ENCODE measurements at regions of chr2 and their contacts with region 1.

Region 1: GRCh38 chr2:239093952-239094351 is 246.1 kb downstream of the TWIST2 start:
- DNase-seq: no peak
- H3K4me3 ChIP-seq: no peak overlapping the region
- CTCF ChIP-seq: no peak

Region 2: GRCh38 chr2:239002954-239003588 is 90.9 kb before region 1 on chr2:
- in situ Hi-C with region 1: loop called (anchors 5 kb)
- DNase-seq: peak; percentile 11
- H3K4me3 ChIP-seq: no peak overlapping the region
- CTCF ChIP-seq: peak; percentile 13

Region 3: GRCh38 chr2:239025096-239025801 is 68.7 kb before region 1 on chr2:
- in situ Hi-C with region 1: no loop called
- DNase-seq: peak; percentile 16
- H3K4me3 ChIP-seq: no peak overlapping the region
- CTCF ChIP-seq: no peak

Region 4: DNA sequence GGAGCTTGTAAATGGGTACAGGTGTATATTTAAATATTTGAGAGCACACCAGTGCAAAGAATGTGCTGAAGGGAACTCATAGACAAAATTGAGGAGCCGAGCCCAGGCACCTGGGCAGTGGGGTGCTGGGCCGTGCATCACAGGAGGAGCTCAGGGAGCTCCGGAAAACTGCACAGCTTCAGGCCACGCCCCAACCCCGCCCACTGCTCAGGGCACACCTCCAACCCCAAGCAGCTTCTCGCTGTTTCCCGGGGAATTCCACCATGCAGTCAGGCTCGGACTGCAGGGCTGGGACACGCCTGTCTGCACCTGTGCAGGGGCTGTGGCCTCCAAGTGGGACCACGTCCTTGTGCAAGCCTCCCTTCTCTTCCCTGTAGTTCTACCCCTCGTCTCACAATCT is 63.8 kb after region 1 on chr2:
- in situ Hi-C with region 1: no loop called
- DNase-seq: no peak
- H3K4me3 ChIP-seq: no peak overlapping the region
- CTCF ChIP-seq: no peak

Measured in astrocyte of the cerebellum (primary cell).